PC-9 (cell line): ENCODE measurements at regions of chr4 and their contacts with region 1.

Region 1: GRCh38 chr4:123547216-123548165 is 150.9 kb downstream of the SPRY1 start:
- DNase-seq: peak; percentile 86 to 93
- H3K4me3 ChIP-seq: peak overlapping the region; percentile 20; the same call in 1 of the 2 replicates
- H3K27ac ChIP-seq: peak overlapping the region; percentile 47
- H3K4me1 ChIP-seq: peaks cover 30% of the 10 kb centered on the region
- H3K27me3 ChIP-seq: no peaks in the 10 kb centered on the region
- CTCF ChIP-seq: no peak

Region 2: DNA sequence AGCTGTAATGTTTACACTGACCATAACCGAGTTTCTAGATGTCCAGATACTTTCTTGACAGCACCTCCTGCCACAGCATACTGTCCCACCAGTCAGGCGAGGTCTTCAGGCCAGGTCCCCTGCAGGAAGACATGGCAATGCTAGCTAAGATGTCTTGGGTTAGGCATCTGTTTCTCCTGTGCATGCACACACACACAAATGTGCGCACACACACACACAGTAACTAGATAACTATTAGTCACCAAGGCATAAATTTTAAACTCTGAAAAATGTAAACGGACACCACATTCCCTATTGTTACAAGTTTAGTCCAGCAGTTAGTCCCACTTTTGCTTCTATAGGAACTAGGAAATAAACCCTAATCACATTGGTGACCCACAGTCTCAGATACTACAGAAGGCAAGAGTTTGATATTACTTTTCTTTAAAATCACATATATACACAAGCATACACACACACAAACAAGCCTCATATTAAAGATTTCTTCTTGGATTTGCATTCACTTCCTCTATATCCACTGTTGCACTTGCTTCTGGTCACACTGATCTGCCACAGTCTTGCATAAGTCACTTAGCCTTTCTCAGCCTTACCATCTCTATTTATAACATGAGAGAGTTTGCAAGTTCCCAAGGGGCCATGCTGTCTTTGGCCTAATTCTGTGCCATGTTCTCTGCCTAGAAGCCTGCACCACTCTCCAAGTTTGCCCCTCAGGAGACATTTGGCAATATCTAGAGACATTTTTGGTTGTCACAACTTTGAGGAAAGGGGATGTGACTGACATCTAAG is 958.8 kb before region 1 on chr4:
- CTCF ChIA-PET with region 1: no interaction called
- POLR2A ChIA-PET with region 1: no interaction called
- intact Hi-C with region 1: no loop called
- DNase-seq: no peak
- H3K4me3 ChIP-seq: no peak overlapping the region
- H3K27ac ChIP-seq: no peak overlapping the region
- H3K4me1 ChIP-seq: no peaks in the 10 kb centered on the region
- H3K27me3 ChIP-seq: no peaks in the 10 kb centered on the region
- CTCF ChIP-seq: no peak

Region 3: GRCh38 chr4:123068081-123068480 is 479.4 kb before region 1 on chr4:
- CTCF ChIA-PET with region 1: no interaction called
- POLR2A ChIA-PET with region 1: no interaction called
- intact Hi-C with region 1: no loop called
- DNase-seq: no peak
- H3K4me3 ChIP-seq: no peak overlapping the region
- H3K27ac ChIP-seq: no peak overlapping the region
- H3K4me1 ChIP-seq: no peaks in the 10 kb centered on the region; the same call in 1 of the 2 replicates
- H3K27me3 ChIP-seq: no peaks in the 10 kb centered on the region
- CTCF ChIP-seq: no peak

Region 4: DNA sequence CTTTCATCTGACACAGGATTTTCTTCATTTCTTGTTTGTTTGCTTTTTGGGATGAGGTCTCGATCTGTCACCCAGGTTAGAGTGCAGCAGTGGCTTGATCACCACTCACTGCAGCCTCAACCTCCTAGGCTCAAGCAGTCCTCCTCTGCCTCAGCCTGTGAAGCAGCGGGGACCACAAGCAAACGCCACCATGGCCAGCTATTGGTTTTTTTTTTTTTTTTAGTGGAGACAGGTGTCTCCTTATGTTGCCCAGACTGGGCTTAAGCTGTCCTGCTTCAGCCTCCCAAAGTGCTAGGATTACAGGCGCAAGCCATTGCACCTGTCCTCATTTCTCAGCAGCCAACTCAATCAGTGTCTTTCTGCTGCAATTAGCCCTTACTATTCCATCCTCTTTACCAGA is 140.6 kb before region 1 on chr4:
- CTCF ChIA-PET with region 1: interaction called, 14 read pairs
- POLR2A ChIA-PET with region 1: interaction called, 3 read pairs
- intact Hi-C with region 1: no loop called
- DNase-seq: no peak
- H3K4me3 ChIP-seq: no peak overlapping the region
- H3K27ac ChIP-seq: no peak overlapping the region
- H3K4me1 ChIP-seq: peaks cover 31% of the 10 kb centered on the region
- H3K27me3 ChIP-seq: no peaks in the 10 kb centered on the region
- CTCF ChIP-seq: no peak

Region 5: DNA sequence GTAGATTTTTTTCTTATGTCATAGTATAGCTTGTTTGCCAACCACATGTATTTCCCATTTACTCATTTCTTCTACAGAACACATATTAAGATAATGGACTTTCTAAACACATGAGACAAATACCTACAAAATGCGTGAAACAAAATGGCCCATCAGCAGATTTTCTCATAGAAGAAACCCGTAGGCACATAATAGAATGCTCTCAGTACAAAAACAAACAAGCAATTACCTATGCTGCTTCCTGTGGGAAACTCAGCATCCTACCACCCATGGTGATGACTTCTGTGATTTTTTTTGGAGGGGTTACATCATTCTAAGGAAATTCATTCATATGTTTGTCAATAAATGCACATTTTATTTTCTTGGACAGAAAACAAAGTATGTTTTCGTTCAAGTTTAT is 192.7 kb after region 1 on chr4:
- CTCF ChIA-PET with region 1: no interaction called
- POLR2A ChIA-PET with region 1: no interaction called
- intact Hi-C with region 1: no loop called
- DNase-seq: no peak
- H3K4me3 ChIP-seq: no peak overlapping the region
- H3K27ac ChIP-seq: no peak overlapping the region
- H3K4me1 ChIP-seq: no peaks in the 10 kb centered on the region
- H3K27me3 ChIP-seq: no peaks in the 10 kb centered on the region
- CTCF ChIP-seq: no peak

Region 6: GRCh38 chr4:124459941-124460310 is 912.4 kb after region 1 on chr4:
- CTCF ChIA-PET with region 1: no interaction called
- POLR2A ChIA-PET with region 1: no interaction called
- intact Hi-C with region 1: no loop called
- DNase-seq: no peak
- H3K4me3 ChIP-seq: no peak overlapping the region
- H3K27ac ChIP-seq: no peak overlapping the region
- H3K4me1 ChIP-seq: no peaks in the 10 kb centered on the region
- H3K27me3 ChIP-seq: no peaks in the 10 kb centered on the region
- CTCF ChIP-seq: no peak